Endothelial cell of umbilical vein (primary cell): ENCODE measurements at regions of chr2 and their contacts with region 1.

Region 1: GRCh38 chr2:207473049-207473930 is 56.5 kb upstream of the CREB1 start:
- DNase-seq: peak; percentile 90
- H3K4me3 ChIP-seq: peak overlapping the region in 1 of 3 experiments; percentile 40
- H3K27ac ChIP-seq: peak overlapping the region; percentile 58
- H3K4me1 ChIP-seq: peaks cover 9% of the 10 kb centered on the region
- H3K27me3 ChIP-seq: no peaks in the 10 kb centered on the region
- CTCF ChIP-seq: peak; percentile 72 to 81
- POLR2A ChIP-seq: no peak

Region 2: DNA sequence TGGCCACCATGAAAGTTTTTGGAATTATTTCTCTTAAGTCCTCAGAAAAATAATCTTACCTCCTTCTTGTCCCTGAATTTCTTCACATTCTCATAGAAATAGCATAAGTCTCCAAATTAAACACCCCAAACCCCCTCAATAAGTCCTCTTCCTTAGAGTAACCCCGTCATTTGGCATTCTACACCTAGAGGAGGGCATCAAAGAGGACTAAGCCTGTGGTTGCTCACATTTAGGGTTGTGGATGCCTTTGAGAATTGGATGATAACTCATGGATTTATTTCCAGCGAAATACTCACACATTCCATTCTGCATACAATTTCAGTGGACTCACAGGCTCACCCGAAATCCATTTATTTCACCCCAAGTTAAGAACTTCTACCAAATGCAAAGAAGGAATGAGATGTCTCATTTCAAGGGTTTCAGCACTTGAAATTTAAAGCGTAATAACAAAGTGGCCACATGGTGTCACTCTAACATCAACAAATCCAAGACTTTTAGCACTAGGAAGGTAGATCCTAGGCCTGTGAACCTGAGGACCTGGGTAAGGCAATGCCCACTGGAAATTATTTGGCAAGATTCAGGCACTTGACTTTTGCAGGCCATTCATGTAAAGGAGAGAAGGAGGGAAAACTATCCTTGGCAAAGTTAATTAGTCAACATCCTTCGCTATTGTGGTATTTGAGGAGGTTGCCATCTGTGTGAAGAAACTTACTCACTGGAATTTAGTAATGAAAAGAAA is 779.7 kb before region 1 on chr2:
- CTCF ChIA-PET with region 1: interaction called, 7 read pairs
- POLR2A ChIA-PET with region 1: no interaction called
- dilution Hi-C with region 1: no loop called
- intact Hi-C with region 1: loop called (anchors 1 kb)
- DNase-seq: peak; percentile 71
- H3K4me3 ChIP-seq: no peak overlapping the region
- H3K27ac ChIP-seq: no peak overlapping the region
- H3K4me1 ChIP-seq: no peaks in the 10 kb centered on the region
- H3K27me3 ChIP-seq: no peaks in the 10 kb centered on the region
- CTCF ChIP-seq: peak; percentile 35 to 40
- POLR2A ChIP-seq: no peak

Region 3: DNA sequence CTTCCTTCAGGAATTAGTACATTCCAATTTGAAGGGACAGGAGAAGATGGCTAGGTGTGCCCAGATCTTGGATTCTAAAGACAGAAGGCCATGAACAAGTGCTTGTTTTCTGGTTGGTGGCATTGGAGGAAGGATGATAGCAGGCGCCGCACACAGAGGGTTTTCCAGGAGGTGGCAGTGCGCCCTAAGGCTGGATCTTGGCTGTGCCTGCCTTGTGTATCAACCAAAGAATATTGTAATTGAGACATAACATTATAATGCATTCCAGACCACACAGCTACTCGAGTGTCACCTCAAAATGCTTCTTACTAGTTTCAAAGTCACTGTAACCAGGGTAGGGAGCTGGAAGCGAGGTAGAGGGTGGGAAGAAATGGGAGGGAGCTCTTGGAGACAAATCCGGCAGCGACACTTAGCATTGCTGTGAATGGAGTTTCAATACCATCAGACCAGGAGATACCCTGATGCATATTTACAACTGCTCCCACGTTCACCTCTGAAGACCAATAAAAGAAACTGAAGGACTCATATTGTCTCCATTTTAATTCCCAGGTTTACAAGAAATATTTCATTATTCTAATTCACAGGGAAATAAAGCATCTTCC is 491.4 kb before region 1 on chr2:
- CTCF ChIA-PET with region 1: interaction called, 76 read pairs
- POLR2A ChIA-PET with region 1: interaction called, 3 read pairs
- dilution Hi-C with region 1: no loop called
- intact Hi-C with region 1: loop called (anchors 1 kb)
- DNase-seq: peak; percentile 79
- H3K4me3 ChIP-seq: no peak overlapping the region
- H3K27ac ChIP-seq: no peak overlapping the region
- H3K4me1 ChIP-seq: no peaks in the 10 kb centered on the region
- H3K27me3 ChIP-seq: peaks cover 0 to 5% of the 10 kb centered on the region in 2 experiments
- CTCF ChIP-seq: peak; percentile 83 to 88
- POLR2A ChIP-seq: no peak

Region 4: GRCh38 chr2:207073801-207074678 is 399.2 kb before region 1 on chr2:
- CTCF ChIA-PET with region 1: interaction called, 34 read pairs
- POLR2A ChIA-PET with region 1: no interaction called
- dilution Hi-C with region 1: no loop called
- intact Hi-C with region 1: loop called (anchors 1 kb)
- DNase-seq: peak; percentile 70
- H3K4me3 ChIP-seq: peak overlapping the region in 2 of 3 experiments; percentile 2 to 12
- H3K27ac ChIP-seq: peak overlapping the region; percentile 22
- H3K4me1 ChIP-seq: peaks cover 23% of the 10 kb centered on the region
- H3K27me3 ChIP-seq: no peaks in the 10 kb centered on the region
- CTCF ChIP-seq: no peak
- POLR2A ChIP-seq: peak; percentile 63

Region 5: DNA sequence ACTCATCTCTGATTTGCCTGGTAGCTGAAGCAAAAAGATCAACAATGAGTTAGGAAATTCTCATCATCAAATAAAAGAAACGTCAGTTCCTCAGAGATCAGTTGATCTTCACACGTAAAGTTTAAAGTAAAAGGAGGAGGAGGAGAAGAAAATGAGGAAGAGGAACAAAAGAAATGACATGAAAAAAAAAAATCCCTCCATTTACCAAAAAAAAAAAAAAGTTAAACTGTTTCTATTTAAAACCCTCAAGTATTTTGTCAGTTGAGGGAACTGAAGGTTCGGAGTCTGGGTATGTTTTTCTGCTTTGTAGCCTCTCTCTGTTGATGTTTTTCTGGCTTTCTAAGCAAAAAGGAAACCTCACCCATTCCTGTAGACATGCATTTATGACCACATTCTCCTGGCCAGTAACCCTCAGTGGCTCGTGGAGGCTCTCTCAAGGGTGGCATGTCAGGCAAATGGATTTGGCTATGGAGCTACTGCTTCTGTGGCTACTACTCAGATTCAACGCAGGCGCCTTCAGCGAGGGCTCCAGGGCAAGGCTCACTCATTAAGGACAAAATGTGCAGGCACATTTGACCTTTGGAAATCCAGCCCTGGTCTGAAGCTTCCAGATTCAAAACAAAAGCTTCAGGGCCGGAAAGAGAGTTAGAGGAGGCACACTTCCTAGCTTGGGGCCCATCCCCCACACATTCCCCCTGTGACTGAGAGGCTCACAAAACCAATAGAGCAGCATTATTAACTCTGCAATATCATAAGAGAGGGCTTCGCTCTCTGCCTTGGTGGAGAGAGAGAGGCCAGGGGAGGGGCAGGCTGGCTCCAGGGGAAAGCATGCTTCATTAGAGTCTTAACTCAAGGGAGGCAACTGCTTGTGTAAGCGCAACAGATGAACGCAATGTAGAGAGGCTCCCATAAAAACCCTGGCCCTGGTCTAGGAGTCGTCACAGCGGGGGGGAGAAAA is 329.8 kb before region 1 on chr2:
- CTCF ChIA-PET with region 1: interaction called, 16 read pairs
- POLR2A ChIA-PET with region 1: no interaction called
- dilution Hi-C with region 1: no loop called
- intact Hi-C with region 1: no loop called
- DNase-seq: peak; percentile 91
- H3K4me3 ChIP-seq: peak overlapping the region in 1 of 3 experiments; percentile 51
- H3K27ac ChIP-seq: peak overlapping the region; percentile 88
- H3K4me1 ChIP-seq: peaks cover 36% of the 10 kb centered on the region
- H3K27me3 ChIP-seq: no peaks in the 10 kb centered on the region
- CTCF ChIP-seq: no peak
- POLR2A ChIP-seq: no peak

Region 6: GRCh38 chr2:207230261-207231105 is 242.8 kb before region 1 on chr2:
- CTCF ChIA-PET with region 1: interaction called, 3 read pairs
- POLR2A ChIA-PET with region 1: no interaction called
- dilution Hi-C with region 1: no loop called
- intact Hi-C with region 1: loop called (anchors 1 kb)
- DNase-seq: peak; percentile 38
- H3K4me3 ChIP-seq: no peak overlapping the region
- H3K27ac ChIP-seq: no peak overlapping the region
- H3K4me1 ChIP-seq: peaks cover 30% of the 10 kb centered on the region
- H3K27me3 ChIP-seq: no peaks in the 10 kb centered on the region
- CTCF ChIP-seq: peak; percentile 32 to 37
- POLR2A ChIP-seq: no peak

Region 7: GRCh38 chr2:207594264-207594663 is 121.0 kb after region 1 on chr2:
- CTCF ChIA-PET with region 1: no interaction called
- POLR2A ChIA-PET with region 1: no interaction called
- dilution Hi-C with region 1: no loop called
- intact Hi-C with region 1: no loop called
- DNase-seq: no peak
- H3K4me3 ChIP-seq: no peak overlapping the region
- H3K27ac ChIP-seq: no peak overlapping the region
- H3K4me1 ChIP-seq: no peaks in the 10 kb centered on the region
- H3K27me3 ChIP-seq: no peaks in the 10 kb centered on the region
- CTCF ChIP-seq: no peak
- POLR2A ChIP-seq: no peak

Region 8: DNA sequence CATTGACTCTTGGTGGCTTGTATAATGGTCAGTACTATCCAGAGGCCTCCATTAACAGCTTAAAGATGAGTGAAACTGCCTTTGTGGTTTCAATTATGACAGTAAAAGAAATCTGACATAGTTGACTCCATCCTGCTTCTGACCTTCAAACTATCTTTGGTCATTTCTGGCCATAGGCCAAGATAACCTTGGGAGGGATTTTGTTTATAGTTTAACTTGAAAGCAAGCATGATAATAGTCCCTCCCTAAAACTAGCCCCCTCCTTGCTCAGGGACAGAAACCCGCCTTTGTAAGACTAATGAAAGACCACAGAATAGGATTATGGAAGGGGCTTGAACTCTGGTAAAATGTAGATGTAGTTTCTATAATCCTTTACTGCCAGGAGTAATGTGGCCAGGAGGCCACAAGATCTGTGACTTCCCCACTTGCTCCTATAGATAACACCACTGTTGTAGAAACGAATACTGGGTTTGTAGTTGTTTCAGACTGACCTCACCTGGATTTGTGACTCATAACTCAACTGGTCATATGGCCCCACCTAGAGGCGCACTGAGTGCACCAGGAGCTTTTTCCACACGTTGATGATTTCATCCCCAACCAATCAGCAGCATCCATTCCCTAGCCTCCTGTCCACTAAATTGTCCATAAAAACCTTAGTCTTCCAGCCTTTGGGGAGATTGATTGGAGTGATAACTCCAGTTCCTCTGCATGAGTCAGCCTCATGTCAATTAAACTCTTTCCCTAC is 560.6 kb after region 1 on chr2:
- CTCF ChIA-PET with region 1: no interaction called
- POLR2A ChIA-PET with region 1: no interaction called
- dilution Hi-C with region 1: no loop called
- intact Hi-C with region 1: loop called (anchors 10 kb)
- DNase-seq: peak; percentile 59
- H3K4me3 ChIP-seq: no peak overlapping the region
- H3K27ac ChIP-seq: no peak overlapping the region
- H3K4me1 ChIP-seq: no peaks in the 10 kb centered on the region
- H3K27me3 ChIP-seq: peaks cover 9 to 11% of the 10 kb centered on the region in 2 experiments
- CTCF ChIP-seq: peak; percentile 16 to 20
- POLR2A ChIP-seq: no peak